ENCODE measurements at regions of chr2 and their contacts with region 1.

Region 1: DNA sequence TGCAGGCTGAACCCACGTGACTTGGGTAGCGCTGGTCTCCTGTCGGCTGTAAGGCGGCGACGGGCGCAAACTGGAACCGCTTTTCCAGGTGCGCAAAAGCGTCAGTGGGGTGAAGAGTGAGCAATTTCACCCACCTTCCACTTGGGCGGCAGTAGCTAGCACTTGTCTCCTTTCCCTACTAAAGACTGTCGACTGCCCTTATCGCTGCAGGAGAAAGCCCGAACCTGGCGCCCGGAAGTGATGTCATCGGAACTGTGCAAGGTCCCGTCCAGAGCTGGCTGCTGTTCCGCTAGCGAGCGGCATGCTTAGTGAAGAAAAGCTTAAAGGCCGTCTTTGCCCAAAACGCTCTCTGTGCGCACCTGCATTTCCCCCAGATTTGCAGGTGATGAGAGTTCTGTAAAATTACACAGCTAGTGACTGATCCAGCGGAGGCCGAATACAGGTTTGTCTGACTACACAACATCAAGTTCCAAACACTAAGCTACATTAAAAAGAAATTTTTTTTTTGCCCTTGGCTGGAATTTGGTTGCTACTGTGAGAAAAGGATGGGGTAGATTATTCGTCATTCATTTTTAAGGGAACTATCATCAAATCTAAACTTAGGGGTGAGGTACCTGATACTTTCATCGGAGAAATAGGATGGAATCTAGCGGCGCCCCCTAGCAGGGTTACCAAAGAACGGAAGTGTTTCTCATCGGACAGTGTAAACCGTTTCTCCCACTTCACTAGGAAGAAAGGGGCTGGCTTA is at the start of gene OSGEPL1:
- DNase-seq: peak; percentile 76 to 96 (median 90)
- ATAC-seq: peak; percentile 94
- H3K4me3 Mint-ChIP-seq: peak within 1 kb of the TSS; percentile 92 to 99 (median 97)
- H3K27ac Mint-ChIP-seq: peak within 1 kb of the TSS; percentile 95 to 99 (median 98)
- H3K4me1 Mint-ChIP-seq: peaks cover 4 to 24% (median 8%) of the 10 kb centered on the region in 4 donors
- H3K27me3 Mint-ChIP-seq: no peaks in the 10 kb centered on the region
- polyA plus RNA-seq, gene OSGEPL1: 17.0 to 22.5 (median 18.3) TPM

Region 2: DNA sequence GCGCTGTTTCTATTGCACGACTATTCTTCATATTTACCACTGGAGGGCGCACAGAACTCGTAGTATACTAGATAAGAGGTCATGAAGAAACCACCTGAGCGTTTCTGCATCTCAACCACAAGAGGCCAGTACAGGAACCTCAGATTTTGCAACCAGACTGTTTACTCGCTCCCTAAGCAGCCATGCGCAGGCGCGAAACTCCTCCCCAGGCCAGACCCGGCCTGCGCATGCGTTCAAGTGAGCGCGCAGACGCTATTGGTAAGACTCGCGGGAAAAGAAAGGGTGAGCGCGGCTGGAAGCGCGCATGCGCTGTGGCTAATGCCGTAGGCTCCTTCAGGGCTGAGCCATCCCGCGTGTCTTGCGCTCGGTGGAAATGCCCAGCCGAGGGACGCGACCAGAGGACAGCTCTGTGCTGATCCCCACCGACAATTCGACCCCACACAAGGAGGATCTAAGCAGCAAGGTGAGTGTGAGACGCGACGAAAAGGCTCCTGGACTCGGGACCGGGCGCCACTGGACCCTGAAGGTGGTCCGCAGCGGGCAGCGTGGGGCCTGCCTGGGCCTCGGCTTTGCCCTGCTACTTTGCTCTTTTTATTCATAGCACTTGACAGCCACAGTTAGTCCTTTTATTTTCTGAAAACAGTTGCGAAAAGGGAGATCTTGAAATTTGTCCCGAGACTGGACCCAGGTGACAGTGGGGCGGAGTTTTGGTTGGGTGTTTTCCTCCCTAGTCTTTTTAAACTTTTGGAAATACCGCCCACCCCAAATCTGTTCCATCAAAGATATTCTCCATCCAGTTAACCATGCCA is 101.4 kb before region 1 on chr2 and contains the start of gene ASNSD1:
- POLR2A ChIA-PET with region 1: interaction called, 19 read pairs
- DNase-seq: peak; percentile 94 to 100 (median 100)
- ATAC-seq: peak; percentile 85 to 87
- H3K4me3 Mint-ChIP-seq: no peak within 1 kb of the TSS
- H3K27ac Mint-ChIP-seq: no peak within 1 kb of the TSS
- H3K4me1 Mint-ChIP-seq: peaks cover 22 to 55% (median 45%) of the 10 kb centered on the region in 4 donors
- H3K27me3 Mint-ChIP-seq: no peaks in the 10 kb centered on the region
- polyA plus RNA-seq, gene ASNSD1: 44.0 to 73.7 (median 49.4) TPM

Region 3: DNA sequence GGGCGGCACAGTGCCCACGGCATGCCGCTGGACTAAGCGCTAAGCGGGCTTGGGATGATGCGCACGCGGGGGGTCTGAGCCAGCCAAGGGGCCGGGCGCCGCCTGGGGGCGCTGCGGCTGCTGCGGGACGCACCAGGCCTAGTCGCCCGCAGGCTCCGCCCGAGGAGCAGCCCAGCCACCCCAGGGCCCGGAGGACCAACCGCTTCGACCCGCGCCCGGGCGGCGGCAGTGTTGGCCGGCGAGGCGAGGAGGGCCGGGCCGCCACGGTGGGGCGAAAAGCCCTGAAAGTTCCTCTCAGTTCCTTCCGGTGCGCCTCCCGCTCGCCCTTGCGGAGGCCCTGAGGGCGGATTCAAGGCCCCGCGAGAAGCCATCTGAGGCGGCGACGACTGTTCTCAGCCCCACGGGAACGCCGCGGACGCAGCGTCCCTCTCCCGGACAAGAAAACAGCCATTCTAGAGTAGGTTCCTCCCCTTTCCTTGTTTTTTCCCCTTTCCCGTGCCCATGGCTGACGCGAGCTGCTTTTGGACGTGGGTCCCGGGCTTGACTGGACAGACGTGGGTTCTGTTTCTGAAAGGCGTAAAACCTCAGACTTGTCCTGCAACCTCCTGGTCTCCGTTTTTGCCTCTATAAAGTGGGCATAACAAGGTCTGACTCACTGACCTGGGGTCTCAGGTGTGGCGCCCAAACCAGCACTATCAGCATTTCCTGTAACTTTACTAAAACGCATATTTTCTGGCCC is 88.2 kb before region 1 on chr2 and contains the start of gene ANKAR:
- POLR2A ChIA-PET with region 1: interaction called, 11 read pairs
- DNase-seq: peak; percentile 68 to 87 (median 82)
- ATAC-seq: peak; percentile 93
- H3K4me3 Mint-ChIP-seq: peak within 1 kb of the TSS; percentile 87 to 97 (median 96)
- H3K27ac Mint-ChIP-seq: peak within 1 kb of the TSS; percentile 96 to 99 (median 98)
- H3K4me1 Mint-ChIP-seq: peaks cover 20 to 52% (median 35%) of the 10 kb centered on the region in 4 donors
- H3K27me3 Mint-ChIP-seq: no peaks in the 10 kb centered on the region
- polyA plus RNA-seq, gene ANKAR: 3.6 to 6.4 (median 5.0) TPM

Region 4: GRCh38 chr2:189751080-189751658 is 11.6 kb before region 1 on chr2:
- POLR2A ChIA-PET with region 1: interaction called, 13 read pairs
- DNase-seq: peak in 9 of 10 donors; percentile 6 to 71 (median 37)
- ATAC-seq: peak; percentile 81 to 87
- H3K4me3 Mint-ChIP-seq: no peak overlapping the region
- H3K27ac Mint-ChIP-seq: peak overlapping the region in 4 of 10 donors; percentile 22 to 55 (median 50)
- H3K4me1 Mint-ChIP-seq: peaks cover 0 to 3% (median 2%) of the 10 kb centered on the region in 4 donors
- H3K27me3 Mint-ChIP-seq: no peaks in the 10 kb centered on the region

Region 5: GRCh38 chr2:189783927-189784867 is 21.5 kb after region 1 on chr2 and contains the starts of genes ORMDL1 and PMS1:
- POLR2A ChIA-PET with region 1: interaction called, 69 read pairs
- DNase-seq: peak; percentile 88 to 98 (median 94)
- ATAC-seq: peak; percentile 89
- H3K4me3 Mint-ChIP-seq: peak within 1 kb of the TSS; percentile 88 to 97 (median 94)
- H3K27ac Mint-ChIP-seq: peak within 1 kb of the TSS; percentile 90 to 98 (median 97)
- H3K4me1 Mint-ChIP-seq: peaks cover 30 to 63% (median 59%) of the 10 kb centered on the region in 4 donors
- H3K27me3 Mint-ChIP-seq: no peaks in the 10 kb centered on the region
- polyA plus RNA-seq, gene ORMDL1: 71.3 to 80.4 (median 78.5) TPM
- polyA plus RNA-seq, gene PMS1: 14.9 to 15.8 (median 15.6) TPM